ENCODE measurements at regions of chr6 and their contacts with region 1.

Region 1: DNA sequence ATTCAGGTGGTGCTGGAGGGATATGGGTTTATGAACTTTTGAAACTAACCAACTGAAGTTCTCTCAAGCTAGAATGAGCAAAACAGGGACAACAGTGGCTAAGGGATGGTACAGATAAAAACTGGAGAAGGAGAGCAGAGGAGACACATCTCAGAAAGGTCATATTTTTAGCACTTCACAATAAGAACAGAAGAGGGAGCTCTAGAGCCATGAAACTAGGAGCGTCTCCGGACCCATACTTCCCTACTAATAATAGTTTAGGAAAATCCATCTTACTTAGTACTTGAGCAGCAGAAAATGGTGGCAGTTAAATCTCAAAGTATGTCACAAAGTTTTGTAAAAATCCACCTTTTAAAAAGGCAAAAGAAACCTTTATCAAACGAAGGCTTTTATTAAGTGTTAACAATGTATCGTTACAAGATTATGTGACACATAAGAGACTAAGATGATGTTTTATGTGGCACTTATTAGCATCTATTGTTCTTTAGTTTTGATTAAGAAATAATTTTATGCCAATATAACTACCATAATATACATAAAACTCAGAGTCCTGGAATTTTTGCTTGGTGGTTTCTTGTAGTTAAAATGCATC is 278.6 kb downstream of the TBC1D32 start:
- DNase-seq: peak in 5 of 9 donors; percentile 11 to 38 (median 34)
- ATAC-seq: peak; percentile 61
- H3K4me3 ChIP-seq: no peak overlapping the region
- H3K4me3 Mint-ChIP-seq: peak overlapping the region in 1 of 10 donors; percentile 35
- H3K27ac ChIP-seq: no peak overlapping the region
- H3K27ac Mint-ChIP-seq: no peak overlapping the region
- H3K4me1 ChIP-seq: no peaks in the 10 kb centered on the region
- H3K4me1 Mint-ChIP-seq: peaks cover 0 to 5% (median 0%) of the 10 kb centered on the region in 7 donors
- H3K27me3 ChIP-seq: no peaks in the 10 kb centered on the region
- H3K27me3 Mint-ChIP-seq: peaks cover 0 to 5% (median 0%) of the 10 kb centered on the region in 5 donors

Region 2: GRCh38 chr6:121236984-121237383 is 181.3 kb after region 1 on chr6:
- CTCF ChIA-PET with region 1: no interaction called
- POLR2A ChIA-PET with region 1: no interaction called
- intact Hi-C with region 1: loop called in 1 of 2 experiments (anchors 1 kb)
- DNase-seq: peak in 1 of 9 donors; percentile 6
- ATAC-seq: no peak
- H3K4me3 ChIP-seq: no peak overlapping the region
- H3K4me3 Mint-ChIP-seq: peak overlapping the region in 1 of 10 donors; percentile 10
- H3K27ac ChIP-seq: no peak overlapping the region
- H3K27ac Mint-ChIP-seq: no peak overlapping the region
- H3K4me1 ChIP-seq: no peaks in the 10 kb centered on the region
- H3K4me1 Mint-ChIP-seq: no peaks in the 10 kb centered on the region
- H3K27me3 ChIP-seq: no peaks in the 10 kb centered on the region
- H3K27me3 Mint-ChIP-seq: no peaks in the 10 kb centered on the region

Region 3: DNA sequence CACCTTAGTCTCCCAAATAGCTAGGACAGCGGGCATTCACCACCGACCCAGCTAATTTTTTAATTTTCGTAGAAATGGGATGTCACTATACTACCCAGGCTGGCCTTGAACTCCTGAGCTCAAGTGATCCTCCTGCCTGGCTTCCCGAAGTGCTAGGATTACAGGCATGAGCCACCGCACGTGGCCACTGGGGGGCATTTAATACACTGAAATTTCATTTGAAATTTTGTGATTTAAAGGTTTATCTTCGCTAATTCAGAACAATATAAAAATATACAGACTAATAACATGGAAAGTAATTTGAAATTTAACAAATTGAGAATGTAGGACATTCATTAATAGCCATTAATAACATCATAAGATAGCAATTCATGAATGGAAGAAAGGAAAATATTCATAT is 299.1 kb after region 1 on chr6:
- CTCF ChIA-PET with region 1: interaction called, 3 read pairs
- POLR2A ChIA-PET with region 1: no interaction called
- intact Hi-C with region 1: loop called in 1 of 2 experiments (anchors 5 kb)
- DNase-seq: no peak
- ATAC-seq: no peak
- H3K4me3 ChIP-seq: no peak overlapping the region
- H3K4me3 Mint-ChIP-seq: no peak overlapping the region
- H3K27ac ChIP-seq: no peak overlapping the region
- H3K27ac Mint-ChIP-seq: no peak overlapping the region
- H3K4me1 ChIP-seq: no peaks in the 10 kb centered on the region
- H3K4me1 Mint-ChIP-seq: no peaks in the 10 kb centered on the region
- H3K27me3 ChIP-seq: no peaks in the 10 kb centered on the region
- H3K27me3 Mint-ChIP-seq: peaks cover 23 to 46% (median 31%) of the 10 kb centered on the region in 5 donors

Region 4: DNA sequence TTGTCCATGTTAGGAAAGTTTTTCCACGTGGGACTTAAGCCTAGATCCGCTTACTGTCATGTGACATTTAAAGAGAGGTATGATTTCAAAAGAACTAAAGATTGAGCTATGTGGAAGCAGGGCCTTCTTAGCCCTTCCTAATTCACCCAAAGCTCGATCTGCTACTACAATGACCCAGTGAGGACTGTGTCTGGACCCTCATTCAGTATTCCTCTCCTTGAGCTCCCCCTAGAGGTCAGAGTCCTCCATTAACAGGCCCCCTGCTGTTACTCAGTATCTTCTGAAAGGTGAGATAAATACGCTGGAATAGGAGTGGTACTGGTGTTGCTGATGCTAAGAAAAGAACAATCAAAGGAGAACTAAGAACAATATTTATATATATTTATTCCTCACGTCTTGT is 793.8 kb after region 1 on chr6:
- CTCF ChIA-PET with region 1: no interaction called
- POLR2A ChIA-PET with region 1: no interaction called
- intact Hi-C with region 1: loop called (anchors 1 kb)
- DNase-seq: peak in 6 of 9 donors; percentile 5 to 43 (median 36)
- ATAC-seq: peak; percentile 57
- H3K4me3 ChIP-seq: no peak overlapping the region
- H3K4me3 Mint-ChIP-seq: peak overlapping the region in 1 of 10 donors; percentile 20
- H3K27ac ChIP-seq: no peak overlapping the region
- H3K27ac Mint-ChIP-seq: peak overlapping the region in 1 of 9 donors; percentile 72
- H3K4me1 ChIP-seq: no peaks in the 10 kb centered on the region
- H3K4me1 Mint-ChIP-seq: peaks cover 0 to 28% (median 20%) of the 10 kb centered on the region in 7 donors
- H3K27me3 ChIP-seq: no peaks in the 10 kb centered on the region
- H3K27me3 Mint-ChIP-seq: peaks cover 0 to 8% (median 0%) of the 10 kb centered on the region in 5 donors

Region 5: DNA sequence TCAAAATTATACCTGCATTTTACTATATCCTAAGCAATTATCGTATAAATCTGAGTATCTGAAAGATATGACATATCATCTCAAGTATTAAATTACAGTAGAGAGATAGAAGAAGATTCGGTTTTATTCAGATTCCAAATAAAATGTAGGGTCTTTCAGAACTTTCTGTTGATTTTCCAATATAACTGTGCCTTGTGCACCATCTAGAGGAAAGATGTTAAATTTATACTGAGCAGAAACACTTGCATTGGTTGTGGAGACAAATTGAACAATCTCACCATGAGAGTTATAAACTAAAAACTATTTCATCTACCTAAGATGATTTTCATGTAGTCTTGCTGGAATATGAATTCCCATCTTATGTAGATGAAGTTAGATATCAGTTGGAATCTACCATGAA is 1317.0 kb after region 1 on chr6:
- CTCF ChIA-PET with region 1: no interaction called
- POLR2A ChIA-PET with region 1: no interaction called
- intact Hi-C with region 1: loop called in 1 of 2 experiments (anchors 2 kb)
- DNase-seq: no peak
- ATAC-seq: no peak
- H3K4me3 ChIP-seq: no peak overlapping the region
- H3K4me3 Mint-ChIP-seq: no peak overlapping the region
- H3K27ac ChIP-seq: no peak overlapping the region
- H3K27ac Mint-ChIP-seq: no peak overlapping the region
- H3K4me1 ChIP-seq: no peaks in the 10 kb centered on the region
- H3K4me1 Mint-ChIP-seq: peaks cover 0 to 9% (median 3%) of the 10 kb centered on the region in 7 donors
- H3K27me3 ChIP-seq: peaks cover 0 to 3% of the 10 kb centered on the region in 2 donors
- H3K27me3 Mint-ChIP-seq: peaks cover 0 to 33% (median 22%) of the 10 kb centered on the region in 5 donors

Measured in naive thymus-derived CD4-positive, alpha-beta T cell (primary cell).